Adrenal gland (tissue), 19 donors: ENCODE measurements at regions of chr15 and their contacts with region 1.

Region 1: DNA sequence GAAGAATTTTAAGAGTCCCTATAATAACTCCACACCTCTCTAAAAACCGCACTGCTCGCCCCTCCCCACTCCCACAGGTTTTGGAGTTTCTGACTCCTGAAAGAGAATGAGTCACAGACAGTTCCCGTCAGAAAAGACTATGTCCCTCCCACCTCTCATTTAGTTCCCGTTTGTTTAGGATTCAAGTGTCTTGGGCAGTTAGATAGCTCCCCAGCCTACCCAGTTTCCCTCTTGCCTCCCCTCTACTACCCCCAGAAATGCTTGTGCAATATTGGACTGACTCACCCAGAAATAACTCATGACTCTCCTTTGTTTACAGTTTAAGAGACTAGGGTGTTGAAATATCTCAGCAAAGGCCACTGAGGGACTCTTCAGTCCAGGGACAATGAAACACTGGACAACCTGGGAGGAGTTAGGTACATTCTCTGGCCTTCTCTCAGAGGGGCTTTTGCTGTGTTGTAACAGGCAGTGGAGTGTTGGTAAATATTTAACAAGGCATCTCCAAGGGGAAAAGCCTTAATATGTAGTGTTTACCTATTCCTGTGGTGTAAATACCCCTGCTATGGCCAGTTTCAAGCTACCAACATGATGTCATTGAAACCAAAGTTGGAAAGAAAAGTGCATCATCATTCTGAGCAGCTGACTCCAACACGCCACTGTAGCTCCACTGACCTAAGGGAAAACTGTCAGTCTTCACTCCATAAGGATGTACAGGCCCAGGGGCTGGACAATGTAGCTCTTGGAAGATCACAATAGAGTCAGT is 96.1 kb upstream of the CHD2 start:
- DNase-seq: peak; percentile 68 to 95 (median 91)
- H3K4me3 ChIP-seq: no peak overlapping the region
- H3K27ac ChIP-seq: peak overlapping the region; percentile 57 to 95 (median 86)
- H3K4me1 ChIP-seq: peaks cover 25 to 31% of the 10 kb centered on the region in 2 donors
- H3K27me3 ChIP-seq: no peaks in the 10 kb centered on the region
- CTCF ChIP-seq: no peak
- POLR2A ChIP-seq: peak in 1 of 2 donors; percentile 72

Region 2: GRCh38 chr15:92636908-92637481 is 167.0 kb before region 1 on chr15:
- intact Hi-C with region 1: no loop called
- DNase-seq: peak in 1 of 7 donors; percentile 53
- H3K4me3 ChIP-seq: no peak overlapping the region
- H3K27ac ChIP-seq: no peak overlapping the region
- H3K4me1 ChIP-seq: no peaks in the 10 kb centered on the region
- H3K27me3 ChIP-seq: no peaks in the 10 kb centered on the region
- CTCF ChIP-seq: no peak
- POLR2A ChIP-seq: no peak

Region 3: DNA sequence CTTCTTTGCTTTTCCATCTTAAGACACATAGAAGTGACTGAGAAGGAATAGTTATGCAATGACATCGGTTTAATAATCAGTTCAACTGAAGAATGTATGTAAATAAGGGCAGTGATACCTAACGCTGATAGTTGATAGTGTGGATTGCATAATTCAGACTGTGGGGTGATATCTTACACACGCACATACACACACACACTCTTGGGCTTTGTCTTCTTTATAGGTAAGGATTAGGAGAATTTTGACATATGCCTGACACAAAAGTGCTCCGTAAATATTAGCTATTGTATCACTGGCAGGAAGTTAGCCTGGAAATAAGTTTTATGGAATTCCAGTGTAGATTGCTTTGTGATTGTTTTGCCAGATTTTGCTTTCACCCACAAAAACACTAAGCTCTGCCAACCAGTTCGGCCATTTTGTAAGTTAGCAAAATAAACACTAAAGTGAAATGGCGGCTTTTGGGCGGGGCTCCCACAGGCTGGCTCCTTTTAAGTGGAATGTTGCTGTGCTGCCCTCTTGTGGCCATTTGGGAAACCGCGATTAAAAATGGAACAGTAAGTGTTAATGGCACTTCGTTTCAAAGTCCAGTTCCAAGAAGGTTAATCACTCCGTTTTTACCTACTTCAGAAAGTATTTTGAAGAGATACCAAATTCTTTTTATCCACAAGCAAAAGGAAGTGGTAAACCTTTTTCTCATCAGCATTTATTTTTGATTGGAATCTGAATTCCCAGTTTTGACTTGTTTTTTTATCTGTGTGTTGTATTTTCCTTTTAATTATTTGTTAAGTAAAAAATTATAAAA is 113.8 kb after region 1 on chr15:
- intact Hi-C with region 1: loop called (anchors 5 to 10 kb)
- DNase-seq: peak; percentile 92 to 99 (median 96)
- H3K4me3 ChIP-seq: no peak overlapping the region
- H3K27ac ChIP-seq: peak overlapping the region; percentile 33 to 92 (median 71)
- H3K4me1 ChIP-seq: peaks cover 43 to 81% of the 10 kb centered on the region in 2 donors
- H3K27me3 ChIP-seq: no peaks in the 10 kb centered on the region
- CTCF ChIP-seq: peak; percentile 91 to 97 (median 95)
- POLR2A ChIP-seq: no peak